ENCODE measurements at regions of chr7 and their contacts with region 1.

Region 1: DNA sequence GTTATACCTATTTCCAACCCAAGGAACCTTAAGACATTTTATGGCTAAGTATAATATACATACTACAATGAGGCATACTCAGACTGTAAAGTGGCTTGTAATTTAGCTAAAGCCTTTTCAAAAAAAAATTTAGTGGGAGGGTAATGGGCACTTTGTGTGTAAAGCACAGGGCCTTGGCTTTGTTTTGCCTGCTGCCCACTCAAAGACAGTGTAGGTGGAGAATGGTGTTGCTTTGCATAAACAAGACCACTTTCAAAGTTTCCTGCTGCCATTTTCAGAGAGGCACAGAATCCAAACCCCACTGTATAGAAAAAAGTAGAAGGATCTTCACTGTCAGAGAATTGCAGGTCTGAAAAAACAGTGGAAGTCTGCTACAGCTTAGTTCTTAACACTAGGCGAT is 21.2 kb upstream of the SLC35B4 start:
- DNase-seq: no peak
- H3K4me3 ChIP-seq: no peak overlapping the region
- H3K27ac ChIP-seq: no peak overlapping the region
- H3K4me1 ChIP-seq: no peaks in the 10 kb centered on the region
- H3K27me3 ChIP-seq: no peaks in the 10 kb centered on the region
- CTCF ChIP-seq: no peak
- EP300 ChIP-seq: no peak
- POLR2A ChIP-seq: no peak
- RAD21 ChIP-seq: no peak

Region 2: GRCh38 chr7:134327896-134328295 is 10.1 kb before region 1 on chr7:
- CTCF ChIA-PET with region 1: interaction called, 10 read pairs
- POLR2A ChIA-PET with region 1: interaction called, 3 read pairs
- DNase-seq: peak; percentile 61 to 81
- H3K4me3 ChIP-seq: no peak overlapping the region
- H3K27ac ChIP-seq: no peak overlapping the region
- H3K4me1 ChIP-seq: no peaks in the 10 kb centered on the region
- H3K27me3 ChIP-seq: no peaks in the 10 kb centered on the region
- CTCF ChIP-seq: peak; percentile 51 to 88 (median 72)
- EP300 ChIP-seq: no peak
- POLR2A ChIP-seq: no peak
- RAD21 ChIP-seq: peak; percentile 90 to 91